Left ventricle myocardium inferior (tissue), 1 donor: ENCODE measurements at regions of chr3 and their contacts with region 1.

Region 1: GRCh38 chr3:137013955-137014688 is 56.3 kb downstream of the IL20RB start:
- DNase-seq: peak; percentile 88
- H3K4me3 ChIP-seq: peak overlapping the region; percentile 64
- H3K27ac ChIP-seq: peak overlapping the region; percentile 64
- H3K4me1 ChIP-seq: peaks cover 5% of the 10 kb centered on the region
- H3K27me3 ChIP-seq: no peaks in the 10 kb centered on the region
- CTCF ChIP-seq: peak; percentile 89

Region 2: DNA sequence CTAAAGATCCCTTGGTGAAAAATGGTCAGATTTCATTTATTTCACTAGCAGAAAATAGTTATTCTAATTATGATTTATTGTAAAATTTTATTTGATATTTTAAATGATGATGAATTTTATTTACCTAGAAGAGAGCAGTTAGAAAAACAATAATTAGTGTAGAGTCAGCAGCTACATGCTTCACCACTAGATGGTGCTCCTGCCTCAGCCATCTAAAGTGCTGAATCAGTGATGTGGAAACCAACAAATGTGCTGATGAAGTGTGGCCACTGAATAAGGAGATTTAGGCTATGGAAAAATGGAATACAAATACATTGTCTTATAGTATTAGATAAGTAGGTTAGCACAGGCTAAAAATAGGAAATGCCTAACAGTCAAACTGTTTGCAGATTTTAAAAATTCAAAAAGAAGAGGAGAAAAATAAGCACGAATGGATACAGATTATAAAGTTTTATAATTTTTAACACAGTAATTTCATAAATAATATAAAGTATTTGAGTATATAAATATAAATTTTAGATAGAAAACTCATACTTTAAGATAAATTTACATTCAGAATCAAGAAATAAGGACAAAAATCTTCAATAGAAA is 938.8 kb before region 1 on chr3:
- intact Hi-C with region 1: loop called (anchors 5 kb)
- DNase-seq: peak; percentile 53
- H3K4me3 ChIP-seq: no peak overlapping the region
- H3K27ac ChIP-seq: peak overlapping the region; percentile 64
- H3K4me1 ChIP-seq: peaks cover 38% of the 10 kb centered on the region
- H3K27me3 ChIP-seq: no peaks in the 10 kb centered on the region
- CTCF ChIP-seq: peak; percentile 92

Region 3: GRCh38 chr3:136818769-136819391 is 195.2 kb before region 1 on chr3 and contains the start of gene SLC35G2:
- intact Hi-C with region 1: loop called (anchors 5 kb)
- DNase-seq: peak; percentile 54
- H3K4me3 ChIP-seq: peak within 1 kb of the TSS; percentile 83
- H3K27ac ChIP-seq: peak within 1 kb of the TSS; percentile 90
- H3K4me1 ChIP-seq: peaks cover 29% of the 10 kb centered on the region
- H3K27me3 ChIP-seq: peaks cover 26% of the 10 kb centered on the region
- CTCF ChIP-seq: no peak
- total RNA-seq, gene SLC35G2: 2.6 TPM

Region 4: GRCh38 chr3:136929984-136930670 is 84.0 kb before region 1 on chr3:
- intact Hi-C with region 1: no loop called
- DNase-seq: peak; percentile 53
- H3K4me3 ChIP-seq: peak overlapping the region; percentile 55
- H3K27ac ChIP-seq: peak overlapping the region; percentile 68
- H3K4me1 ChIP-seq: peaks cover 62% of the 10 kb centered on the region
- H3K27me3 ChIP-seq: no peaks in the 10 kb centered on the region
- CTCF ChIP-seq: no peak